GM23248 (cell line): ENCODE measurements at regions of chr14 and their contacts with region 1.

Region 1: GRCh38 chr14:28751467-28752058 is 15.0 kb upstream of the FOXG1 start:
- DNase-seq: peak; percentile 73
- H3K4me3 ChIP-seq: no peak overlapping the region
- H3K27ac ChIP-seq: no peak overlapping the region
- H3K4me1 ChIP-seq: no peaks in the 10 kb centered on the region
- H3K27me3 ChIP-seq: peaks cover 23% of the 10 kb centered on the region

Region 2: GRCh38 chr14:29222671-29223268 is 471.2 kb after region 1 on chr14:
- in situ Hi-C with region 1: loop called (anchors 10 kb)
- DNase-seq: peak; percentile 79
- H3K4me3 ChIP-seq: peak overlapping the region; percentile 61
- H3K27ac ChIP-seq: no peak overlapping the region
- H3K4me1 ChIP-seq: peaks cover 9% of the 10 kb centered on the region; the same call in 1 of the 2 replicates
- H3K27me3 ChIP-seq: no peaks in the 10 kb centered on the region

Region 3: DNA sequence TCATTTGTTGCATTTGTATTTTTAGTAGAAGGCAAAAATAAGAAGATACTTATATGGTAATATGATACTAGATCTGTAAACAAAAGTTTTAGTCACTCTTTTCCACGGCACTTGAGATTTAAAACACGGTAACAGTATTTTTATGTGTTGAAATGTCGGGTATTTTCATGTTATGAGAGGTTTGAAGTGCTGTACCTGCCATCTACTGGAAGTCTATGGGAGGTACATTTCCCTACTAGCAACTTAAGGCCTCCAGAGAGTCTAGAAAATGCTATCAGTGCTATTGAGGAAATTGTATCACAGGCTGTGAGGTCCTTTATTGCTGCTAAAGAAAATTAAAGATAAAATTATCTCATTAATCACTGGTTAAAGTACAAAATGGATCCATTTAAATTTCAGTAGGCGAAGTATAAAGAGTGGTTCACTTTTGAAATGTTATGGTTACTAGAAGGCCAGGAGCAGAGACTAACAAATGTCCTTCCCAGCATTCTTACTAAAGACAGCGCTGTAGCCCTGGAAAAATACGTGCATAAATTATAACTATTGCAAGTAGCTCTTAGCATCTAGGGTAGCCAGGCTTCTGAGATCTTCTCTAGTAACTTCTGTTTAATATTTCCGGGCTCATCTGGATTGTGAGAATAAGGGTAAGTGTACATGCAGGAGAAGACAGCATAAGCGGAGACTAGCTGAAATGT is 1253.7 kb after region 1 on chr14:
- in situ Hi-C with region 1: loop called (anchors 25 kb)
- DNase-seq: peak; percentile 75
- H3K4me3 ChIP-seq: peak overlapping the region; percentile 51
- H3K27ac ChIP-seq: no peak overlapping the region
- H3K4me1 ChIP-seq: peaks cover 7% of the 10 kb centered on the region; the same call in 1 of the 2 replicates
- H3K27me3 ChIP-seq: no peaks in the 10 kb centered on the region

Region 4: GRCh38 chr14:30214461-30215090 is 1463.0 kb after region 1 on chr14:
- in situ Hi-C with region 1: loop called (anchors 10 kb)
- DNase-seq: peak; percentile 85
- H3K4me3 ChIP-seq: peak overlapping the region; percentile 41
- H3K27ac ChIP-seq: no peak overlapping the region
- H3K4me1 ChIP-seq: peaks cover 40% of the 10 kb centered on the region
- H3K27me3 ChIP-seq: no peaks in the 10 kb centered on the region